ENCODE measurements at regions of chr2 and their contacts with region 1.

Region 1: DNA sequence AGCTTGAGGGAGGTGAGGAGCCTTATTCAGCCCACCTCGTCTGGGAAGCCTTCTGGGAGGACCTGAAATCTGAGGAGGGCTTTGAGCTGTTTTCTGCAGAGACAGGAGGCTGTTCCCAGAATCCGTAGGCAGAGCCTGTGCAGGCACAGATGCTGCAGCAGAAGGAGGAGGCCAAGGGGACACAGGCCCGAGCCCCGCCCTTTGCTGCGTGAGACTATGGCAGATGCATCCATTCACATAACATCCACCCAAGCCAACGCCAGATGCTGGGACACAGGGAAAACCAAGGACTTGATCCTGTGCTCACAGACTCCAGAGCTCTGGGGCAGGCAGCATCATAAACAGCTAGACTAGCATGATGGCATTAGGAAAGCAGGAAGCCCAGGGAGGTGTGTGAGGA is 98.2 kb downstream of the KCNF1 start:
- DNase-seq: no peak
- H3K4me3 ChIP-seq: no peak overlapping the region
- H3K27ac ChIP-seq: no peak overlapping the region
- H3K4me1 ChIP-seq: no peaks in the 10 kb centered on the region
- H3K27me3 ChIP-seq: peaks cover 2% of the 10 kb centered on the region
- CTCF ChIP-seq: no peak

Region 2: GRCh38 chr2:9451231-9451630 is 1558.7 kb before region 1 on chr2:
- CTCF ChIA-PET with region 1: no interaction called
- POLR2A ChIA-PET with region 1: no interaction called
- intact Hi-C with region 1: no loop called
- DNase-seq: no peak
- H3K4me3 ChIP-seq: no peak overlapping the region
- H3K27ac ChIP-seq: no peak overlapping the region
- H3K4me1 ChIP-seq: no peaks in the 10 kb centered on the region
- H3K27me3 ChIP-seq: no peaks in the 10 kb centered on the region
- CTCF ChIP-seq: no peak

Region 3: GRCh38 chr2:10982931-10983701 is 26.8 kb before region 1 on chr2:
- CTCF ChIA-PET with region 1: no interaction called
- POLR2A ChIA-PET with region 1: no interaction called
- intact Hi-C with region 1: no loop called
- DNase-seq: no peak
- H3K4me3 ChIP-seq: no peak overlapping the region
- H3K27ac ChIP-seq: no peak overlapping the region
- H3K4me1 ChIP-seq: no peaks in the 10 kb centered on the region
- H3K27me3 ChIP-seq: no peaks in the 10 kb centered on the region
- CTCF ChIP-seq: no peak

Region 4: DNA sequence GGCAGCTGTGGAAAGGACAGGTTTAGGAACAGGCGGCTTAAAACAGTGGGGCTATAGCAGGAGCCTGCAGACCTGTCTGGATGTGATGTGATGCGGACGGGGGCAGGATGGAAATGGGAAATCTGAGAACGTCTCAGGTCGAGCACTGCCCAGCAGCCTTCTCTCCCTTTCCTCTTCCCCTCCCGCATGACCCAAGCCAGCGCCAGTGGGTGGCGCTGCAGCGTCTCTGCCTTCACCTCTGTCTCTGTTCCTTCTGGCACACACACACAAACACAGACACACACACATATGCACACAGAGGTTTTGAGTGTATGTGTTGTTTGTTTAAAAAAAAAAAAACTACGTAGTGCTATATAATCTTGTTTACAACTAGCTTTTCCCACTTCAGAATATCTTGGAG is 63.4 kb after region 1 on chr2:
- CTCF ChIA-PET with region 1: no interaction called
- POLR2A ChIA-PET with region 1: no interaction called
- intact Hi-C with region 1: loop called (anchors 5 kb)
- DNase-seq: peak; percentile 63
- H3K4me3 ChIP-seq: no peak overlapping the region
- H3K27ac ChIP-seq: no peak overlapping the region
- H3K4me1 ChIP-seq: no peaks in the 10 kb centered on the region
- H3K27me3 ChIP-seq: no peaks in the 10 kb centered on the region
- CTCF ChIP-seq: peak; percentile 84

Region 5: DNA sequence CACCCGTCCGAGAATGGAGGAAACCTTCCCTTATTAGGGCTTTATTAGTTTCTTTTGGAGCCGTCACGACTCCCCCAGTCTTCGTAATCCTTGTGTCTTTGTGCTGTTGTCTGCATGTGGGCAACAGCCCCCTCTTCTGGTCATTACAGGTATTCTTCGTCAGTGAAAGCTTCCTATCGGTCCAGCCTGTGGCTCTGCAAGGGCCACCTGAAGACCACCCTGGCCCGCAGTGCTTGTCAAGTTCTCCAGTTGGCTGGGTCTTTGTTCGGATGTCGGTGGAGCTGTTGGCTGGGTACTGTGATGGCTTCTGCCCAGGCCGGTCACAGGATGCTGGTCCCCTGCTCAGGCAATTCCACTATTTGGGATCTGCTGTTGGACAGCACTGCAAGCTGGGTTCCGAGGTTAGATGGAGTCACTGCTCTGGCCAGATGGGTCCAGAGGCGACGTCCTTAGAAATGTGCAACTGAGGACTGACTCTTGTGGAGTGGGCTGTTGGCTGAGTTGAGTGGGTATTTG is 436.9 kb after region 1 on chr2:
- CTCF ChIA-PET with region 1: no interaction called
- POLR2A ChIA-PET with region 1: no interaction called
- intact Hi-C with region 1: no loop called
- DNase-seq: peak; percentile 80
- H3K4me3 ChIP-seq: no peak overlapping the region
- H3K27ac ChIP-seq: no peak overlapping the region
- H3K4me1 ChIP-seq: no peaks in the 10 kb centered on the region
- H3K27me3 ChIP-seq: no peaks in the 10 kb centered on the region
- CTCF ChIP-seq: peak; percentile 90